ENCODE measurements at regions of chr1 and their contacts with region 1.

Region 1: GRCh38 chr1:108828022-108828961 is 28.6 kb downstream of the AKNAD1 start:
- DNase-seq: no peak
- H3K4me3 ChIP-seq: peak overlapping the region; percentile 23; the same call in 1 of the 2 replicates
- H3K27ac ChIP-seq: peak overlapping the region; percentile 76
- H3K27me3 ChIP-seq: no peaks in the 10 kb centered on the region
- CTCF ChIP-seq: peak; percentile 77

Region 2: DNA sequence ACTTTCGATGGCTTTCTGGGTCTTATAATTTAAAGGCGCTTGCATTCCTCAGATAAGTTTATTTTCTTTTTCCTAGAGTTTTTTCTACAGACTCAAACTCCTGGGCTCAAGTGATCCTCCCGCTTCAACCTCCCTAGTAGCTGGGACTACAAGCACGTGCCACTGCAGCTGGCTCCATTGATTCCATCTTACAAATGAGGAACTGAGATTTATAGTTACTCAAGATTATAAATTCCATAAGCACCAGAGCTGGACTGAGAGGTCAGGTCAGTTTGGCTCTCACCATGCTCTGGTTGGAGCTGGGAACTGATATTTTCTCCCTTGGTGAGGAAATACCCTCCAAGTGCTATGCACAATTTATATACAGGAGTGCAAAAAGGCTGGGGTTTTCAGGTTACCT is 149.6 kb before region 1 on chr1:
- CTCF ChIA-PET with region 1: no interaction called
- POLR2A ChIA-PET with region 1: no interaction called
- DNase-seq: no peak
- H3K4me3 ChIP-seq: no peak overlapping the region
- H3K27ac ChIP-seq: no peak overlapping the region
- H3K27me3 ChIP-seq: no peaks in the 10 kb centered on the region
- CTCF ChIP-seq: no peak

Region 3: DNA sequence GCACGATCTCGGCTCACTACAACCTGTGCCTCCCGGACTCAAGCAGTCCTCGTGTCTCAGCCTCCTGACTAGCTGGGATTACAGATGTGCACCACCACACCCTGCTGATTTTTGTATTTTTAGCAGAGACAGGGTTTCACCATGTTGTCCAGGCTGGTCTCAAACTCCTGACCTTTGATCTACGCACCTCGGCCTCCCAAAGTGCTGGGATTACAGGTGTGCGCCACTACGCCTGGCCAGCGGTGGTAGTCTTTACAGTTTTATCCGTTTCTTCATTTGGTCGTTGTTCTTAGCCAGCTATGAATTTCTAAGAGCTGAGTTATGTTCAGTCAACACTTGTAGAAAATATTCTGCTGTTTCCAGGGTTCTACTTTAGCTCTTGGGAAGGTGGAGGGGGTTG is 24.7 kb before region 1 on chr1:
- CTCF ChIA-PET with region 1: no interaction called
- POLR2A ChIA-PET with region 1: no interaction called
- DNase-seq: no peak
- H3K4me3 ChIP-seq: no peak overlapping the region
- H3K27ac ChIP-seq: no peak overlapping the region
- H3K27me3 ChIP-seq: no peaks in the 10 kb centered on the region
- CTCF ChIP-seq: no peak

Region 4: GRCh38 chr1:108816049-108816893 is 12.0 kb before region 1 on chr1:
- CTCF ChIA-PET with region 1: interaction called, 55 read pairs
- POLR2A ChIA-PET with region 1: interaction called, 11 read pairs
- DNase-seq: peak; percentile 80
- H3K4me3 ChIP-seq: peak overlapping the region; percentile 37
- H3K27ac ChIP-seq: peak overlapping the region; percentile 97
- H3K27me3 ChIP-seq: no peaks in the 10 kb centered on the region
- CTCF ChIP-seq: no peak

Region 5: GRCh38 chr1:108841703-108842102 is 13.4 kb after region 1 on chr1:
- CTCF ChIA-PET with region 1: interaction called, 27 read pairs
- POLR2A ChIA-PET with region 1: interaction called, 4 read pairs
- DNase-seq: no peak
- H3K4me3 ChIP-seq: no peak overlapping the region
- H3K27ac ChIP-seq: no peak overlapping the region
- H3K27me3 ChIP-seq: peaks cover 2% of the 10 kb centered on the region
- CTCF ChIP-seq: no peak

Region 6: GRCh38 chr1:108881369-108881768 is 53.1 kb after region 1 on chr1:
- CTCF ChIA-PET with region 1: interaction called, 18 read pairs
- POLR2A ChIA-PET with region 1: interaction called, 4 read pairs
- DNase-seq: no peak
- H3K4me3 ChIP-seq: no peak overlapping the region
- H3K27ac ChIP-seq: no peak overlapping the region
- H3K27me3 ChIP-seq: no peaks in the 10 kb centered on the region
- CTCF ChIP-seq: no peak

Region 7: GRCh38 chr1:108892356-108893140 is 64.3 kb after region 1 on chr1:
- CTCF ChIA-PET with region 1: interaction called, 211 read pairs
- POLR2A ChIA-PET with region 1: no interaction called
- DNase-seq: no peak
- H3K4me3 ChIP-seq: no peak overlapping the region
- H3K27ac ChIP-seq: no peak overlapping the region
- H3K27me3 ChIP-seq: no peaks in the 10 kb centered on the region
- CTCF ChIP-seq: no peak

Region 8: DNA sequence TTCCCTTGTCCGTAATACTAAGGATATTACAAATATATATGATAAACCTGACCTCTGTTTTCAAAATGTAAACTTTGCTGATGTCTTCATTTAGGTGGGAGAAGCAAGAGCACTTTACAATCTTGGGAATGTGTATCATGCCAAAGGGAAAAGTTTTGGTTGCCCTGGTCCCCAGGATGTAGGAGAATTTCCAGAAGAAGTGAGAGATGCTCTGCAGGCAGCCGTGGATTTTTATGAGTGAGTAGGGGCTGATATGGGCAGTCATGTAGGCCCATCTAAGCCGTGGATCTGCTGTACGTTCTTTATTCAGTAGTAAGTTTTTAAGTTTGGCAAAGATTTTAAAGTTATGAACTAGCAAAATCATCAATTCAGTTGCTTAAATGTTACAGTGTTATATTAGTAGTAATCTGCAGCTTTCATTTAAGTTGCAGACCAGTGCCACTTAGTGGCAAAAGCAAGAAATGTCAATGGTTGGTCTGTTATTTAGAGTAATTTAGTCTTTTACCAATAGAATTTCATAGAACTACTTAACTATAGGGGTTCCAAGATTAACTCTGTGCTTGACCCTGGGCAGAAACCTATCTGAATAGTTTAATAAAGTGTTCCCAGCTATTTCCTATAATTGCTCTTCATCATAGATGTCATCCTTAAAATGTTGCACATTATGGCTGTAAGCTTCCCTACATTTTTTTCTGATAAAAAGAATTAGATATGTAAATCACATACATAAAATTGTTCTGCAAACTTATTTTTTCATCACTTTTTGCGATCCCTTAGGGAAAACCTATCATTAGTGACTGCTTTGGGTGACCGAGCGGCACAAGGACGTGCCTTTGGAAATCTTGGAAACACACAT is 69.8 kb after region 1 on chr1:
- CTCF ChIA-PET with region 1: interaction called, 211 read pairs
- POLR2A ChIA-PET with region 1: no interaction called
- DNase-seq: peak; percentile 34
- H3K4me3 ChIP-seq: no peak overlapping the region
- H3K27ac ChIP-seq: no peak overlapping the region
- H3K27me3 ChIP-seq: no peaks in the 10 kb centered on the region
- CTCF ChIP-seq: peak; percentile 68

Region 9: DNA sequence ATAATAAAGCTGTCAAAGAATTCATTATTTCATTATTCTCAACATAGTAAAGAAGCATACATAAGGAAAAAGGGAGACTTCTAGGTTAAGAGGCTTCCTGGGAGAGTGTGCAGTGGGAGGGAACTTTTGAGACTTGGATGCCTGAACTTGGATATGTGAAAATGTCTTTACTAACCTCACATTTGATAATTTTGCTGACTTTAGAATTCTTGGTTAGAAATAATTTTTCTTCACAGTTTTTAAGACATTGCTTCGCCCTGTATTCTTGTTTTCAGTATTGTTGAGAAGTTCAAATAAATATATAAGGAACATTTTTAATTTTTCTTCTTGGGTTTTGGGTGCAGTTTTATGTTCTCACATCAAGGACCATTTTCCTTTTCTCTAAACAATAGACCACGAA is 88.5 kb after region 1 on chr1:
- CTCF ChIA-PET with region 1: interaction called, 10 read pairs
- POLR2A ChIA-PET with region 1: no interaction called
- DNase-seq: no peak
- H3K4me3 ChIP-seq: no peak overlapping the region
- H3K27ac ChIP-seq: no peak overlapping the region
- H3K27me3 ChIP-seq: no peaks in the 10 kb centered on the region
- CTCF ChIP-seq: no peak

Measured in AG04450 (cell line).